Activated naive CD4-positive, alpha-beta T cell treated with anti-CD3 and anti-CD28 coated beads for 36 hours (primary cell): ENCODE measurements at regions of chr6 and their contacts with region 1.

Region 1: DNA sequence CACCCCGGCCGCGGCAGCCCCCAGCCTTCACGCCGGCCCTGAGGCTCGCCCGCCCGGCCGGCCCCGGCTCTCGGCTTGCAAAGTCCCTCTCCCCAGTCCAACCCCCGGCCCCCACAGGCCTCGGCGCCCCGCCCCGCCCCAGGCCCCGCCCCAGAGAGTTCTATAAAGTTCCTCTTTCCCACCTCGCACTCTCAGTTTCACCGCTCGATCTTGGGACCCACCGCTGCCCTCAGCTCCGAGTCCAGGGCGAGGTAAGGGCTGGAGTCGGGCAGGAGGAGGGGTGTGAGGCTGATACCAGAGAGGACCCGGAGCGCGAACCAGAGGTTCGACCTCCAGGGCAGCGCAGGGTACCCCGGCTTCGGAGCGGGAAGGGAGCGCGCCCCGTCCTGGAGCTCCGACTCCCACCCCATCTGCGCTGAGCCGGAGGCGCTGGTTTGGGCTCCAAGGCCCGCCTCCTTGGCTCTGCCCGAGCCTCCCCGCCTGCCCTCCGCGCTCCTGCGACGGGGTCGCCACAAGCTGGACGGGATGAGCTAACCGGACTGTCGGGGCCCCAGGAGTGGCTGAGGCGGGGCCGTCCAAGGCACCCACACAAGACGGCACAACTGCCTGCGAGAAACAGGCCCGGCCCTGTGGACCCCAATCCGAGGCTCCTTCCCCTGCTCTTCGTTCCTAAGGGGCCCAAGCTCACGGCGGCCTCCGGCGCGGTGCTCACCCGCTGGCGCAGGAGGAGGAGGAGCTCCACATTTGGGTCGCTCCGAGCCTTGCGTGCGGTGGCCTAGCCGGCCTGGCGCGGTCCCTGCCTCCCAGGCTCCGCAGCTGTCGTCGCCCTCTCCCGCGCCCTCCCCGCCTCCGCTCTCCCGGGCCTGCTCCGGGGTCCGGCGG is at the start of gene IRF4:
- DNase-seq: peak; percentile 70
- H3K4me3 Mint-ChIP-seq: peak within 1 kb of the TSS; percentile 93
- H3K27ac Mint-ChIP-seq: peak within 1 kb of the TSS; percentile 95
- H3K4me1 Mint-ChIP-seq: peaks cover 44% of the 10 kb centered on the region
- H3K27me3 Mint-ChIP-seq: peaks cover 4% of the 10 kb centered on the region
- total RNA-seq, gene IRF4: 500 to 504 TPM

Region 2: GRCh38 chr6:227074-227782 is 164.6 kb before region 1 on chr6:
- CTCF ChIA-PET with region 1: interaction called, 14 read pairs
- intact Hi-C with region 1: loop called (anchors 1 kb)
- DNase-seq: peak; percentile 60
- H3K4me3 Mint-ChIP-seq: no peak overlapping the region
- H3K27ac Mint-ChIP-seq: peak overlapping the region; percentile 95
- H3K4me1 Mint-ChIP-seq: peaks cover 65% of the 10 kb centered on the region
- H3K27me3 Mint-ChIP-seq: no peaks in the 10 kb centered on the region

Region 3: GRCh38 chr6:285030-285809 is 106.6 kb before region 1 on chr6:
- CTCF ChIA-PET with region 1: no interaction called
- intact Hi-C with region 1: no loop called
- DNase-seq: no peak
- H3K4me3 Mint-ChIP-seq: no peak overlapping the region
- H3K27ac Mint-ChIP-seq: no peak overlapping the region
- H3K4me1 Mint-ChIP-seq: peaks cover 44% of the 10 kb centered on the region
- H3K27me3 Mint-ChIP-seq: no peaks in the 10 kb centered on the region

Region 4: GRCh38 chr6:446418-447366 is 54.9 kb after region 1 on chr6:
- CTCF ChIA-PET with region 1: no interaction called
- intact Hi-C with region 1: loop called (anchors 1 kb)
- DNase-seq: peak; percentile 96
- H3K4me3 Mint-ChIP-seq: peak overlapping the region; percentile 43
- H3K27ac Mint-ChIP-seq: peak overlapping the region; percentile 95
- H3K4me1 Mint-ChIP-seq: peaks cover 50% of the 10 kb centered on the region
- H3K27me3 Mint-ChIP-seq: no peaks in the 10 kb centered on the region

Region 5: GRCh38 chr6:498795-499231 is 107.0 kb after region 1 on chr6:
- CTCF ChIA-PET with region 1: interaction called, 4 read pairs
- intact Hi-C with region 1: loop called (anchors 1 kb)
- DNase-seq: peak; percentile 80
- H3K4me3 Mint-ChIP-seq: peak overlapping the region; percentile 56
- H3K27ac Mint-ChIP-seq: peak overlapping the region; percentile 96
- H3K4me1 Mint-ChIP-seq: peaks cover 83% of the 10 kb centered on the region
- H3K27me3 Mint-ChIP-seq: no peaks in the 10 kb centered on the region

Region 6: DNA sequence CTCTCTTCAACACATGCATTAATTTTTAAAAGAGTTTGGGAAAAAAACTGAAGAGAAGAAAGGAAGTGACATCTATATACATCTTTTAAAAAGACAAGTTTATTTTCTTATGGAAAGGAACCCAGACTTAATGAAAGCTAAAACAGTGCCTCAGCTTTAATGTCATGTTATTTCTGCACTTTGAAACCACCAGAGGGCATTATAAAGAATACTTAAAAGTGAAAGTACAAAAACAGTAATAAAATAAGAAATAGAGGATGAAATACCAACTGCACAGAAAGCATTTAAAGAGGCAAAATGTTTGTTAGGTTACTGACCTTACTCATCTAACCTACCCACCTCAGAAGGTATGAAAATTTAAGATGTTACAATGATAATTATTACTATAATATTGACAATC is 166.3 kb after region 1 on chr6:
- CTCF ChIA-PET with region 1: no interaction called
- intact Hi-C with region 1: loop called (anchors 1 kb)
- DNase-seq: no peak
- H3K4me3 Mint-ChIP-seq: no peak overlapping the region
- H3K27ac Mint-ChIP-seq: peak overlapping the region; percentile 59
- H3K4me1 Mint-ChIP-seq: peaks cover 51% of the 10 kb centered on the region
- H3K27me3 Mint-ChIP-seq: no peaks in the 10 kb centered on the region

Region 7: GRCh38 chr6:710601-711571 is 319.1 kb after region 1 on chr6:
- CTCF ChIA-PET with region 1: no interaction called
- intact Hi-C with region 1: loop called (anchors 2 kb)
- DNase-seq: peak; percentile 64
- H3K4me3 Mint-ChIP-seq: peak overlapping the region; percentile 89
- H3K27ac Mint-ChIP-seq: peak overlapping the region; percentile 92
- H3K4me1 Mint-ChIP-seq: peaks cover 21% of the 10 kb centered on the region
- H3K27me3 Mint-ChIP-seq: peaks cover 4% of the 10 kb centered on the region

Region 8: GRCh38 chr6:1222728-1223595 is 831.2 kb after region 1 on chr6:
- CTCF ChIA-PET with region 1: no interaction called
- intact Hi-C with region 1: no loop called
- DNase-seq: no peak
- H3K4me3 Mint-ChIP-seq: no peak overlapping the region
- H3K27ac Mint-ChIP-seq: no peak overlapping the region
- H3K4me1 Mint-ChIP-seq: no peaks in the 10 kb centered on the region
- H3K27me3 Mint-ChIP-seq: peaks cover 7% of the 10 kb centered on the region

Region 9: GRCh38 chr6:1381481-1382330 is 989.9 kb after region 1 on chr6:
- CTCF ChIA-PET with region 1: no interaction called
- intact Hi-C with region 1: loop called (anchors 2 kb)
- DNase-seq: peak; percentile 63
- H3K4me3 Mint-ChIP-seq: no peak overlapping the region
- H3K27ac Mint-ChIP-seq: no peak overlapping the region
- H3K4me1 Mint-ChIP-seq: peaks cover 41% of the 10 kb centered on the region
- H3K27me3 Mint-ChIP-seq: peaks cover 74% of the 10 kb centered on the region